ENCODE measurements at regions of chr12 and their contacts with region 1.

Region 1: GRCh38 chr12:13211859-13212664 is 15.5 kb downstream of the EMP1 start:
- DNase-seq: peak; percentile 39 to 62 (median 42)
- ATAC-seq: peak; percentile 74
- H3K4me3 ChIP-seq: no peak overlapping the region
- H3K27ac ChIP-seq: no peak overlapping the region
- H3K4me1 ChIP-seq: no peaks in the 10 kb centered on the region
- H3K27me3 ChIP-seq: peaks cover 0 to 11% of the 10 kb centered on the region in 2 experiments; a peak in 1 of 5 replicates
- CTCF ChIP-seq: peak; percentile 58 to 76 (median 76)
- EP300 ChIP-seq: no peak
- POLR2A ChIP-seq: no peak
- RAD21 ChIP-seq: peak; percentile 59 to 71

Region 2: GRCh38 chr12:12786716-12787601 is 425.1 kb before region 1 on chr12:
- CTCF ChIA-PET with region 1: no interaction called
- POLR2A ChIA-PET with region 1: no interaction called
- in situ Hi-C with region 1: no loop called
- intact Hi-C with region 1: loop called (anchors 5 kb)
- DNase-seq: peak; percentile 84 to 93 (median 90)
- ATAC-seq: peak; percentile 95
- H3K4me3 ChIP-seq: peak overlapping the region; percentile 46
- H3K27ac ChIP-seq: peak overlapping the region; percentile 81
- H3K4me1 ChIP-seq: peaks cover 15 to 37% of the 10 kb centered on the region in 2 experiments
- H3K27me3 ChIP-seq: no peaks in the 10 kb centered on the region
- CTCF ChIP-seq: peak in 1 of 3 experiments; percentile 8; a peak in 1 of 6 replicates
- EP300 ChIP-seq: no peak
- POLR2A ChIP-seq: peak; percentile 77
- RAD21 ChIP-seq: no peak

Region 3: GRCh38 chr12:12916135-12916944 is 295.7 kb before region 1 on chr12:
- CTCF ChIA-PET with region 1: interaction called, 5 read pairs
- POLR2A ChIA-PET with region 1: no interaction called
- in situ Hi-C with region 1: loop called (anchors 5 kb)
- intact Hi-C with region 1: loop called (anchors 2 kb)
- DNase-seq: peak; percentile 66 to 84 (median 70)
- ATAC-seq: peak; percentile 99
- H3K4me3 ChIP-seq: no peak overlapping the region
- H3K27ac ChIP-seq: no peak overlapping the region
- H3K4me1 ChIP-seq: no peaks in the 10 kb centered on the region; a peak in 1 of 5 replicates
- H3K27me3 ChIP-seq: peaks cover 3 to 17% of the 10 kb centered on the region in 2 experiments; a peak in 3 of 5 replicates
- CTCF ChIP-seq: peak; percentile 87 to 94 (median 92)
- EP300 ChIP-seq: no peak
- POLR2A ChIP-seq: no peak
- RAD21 ChIP-seq: peak; percentile 87 to 93

Region 4: DNA sequence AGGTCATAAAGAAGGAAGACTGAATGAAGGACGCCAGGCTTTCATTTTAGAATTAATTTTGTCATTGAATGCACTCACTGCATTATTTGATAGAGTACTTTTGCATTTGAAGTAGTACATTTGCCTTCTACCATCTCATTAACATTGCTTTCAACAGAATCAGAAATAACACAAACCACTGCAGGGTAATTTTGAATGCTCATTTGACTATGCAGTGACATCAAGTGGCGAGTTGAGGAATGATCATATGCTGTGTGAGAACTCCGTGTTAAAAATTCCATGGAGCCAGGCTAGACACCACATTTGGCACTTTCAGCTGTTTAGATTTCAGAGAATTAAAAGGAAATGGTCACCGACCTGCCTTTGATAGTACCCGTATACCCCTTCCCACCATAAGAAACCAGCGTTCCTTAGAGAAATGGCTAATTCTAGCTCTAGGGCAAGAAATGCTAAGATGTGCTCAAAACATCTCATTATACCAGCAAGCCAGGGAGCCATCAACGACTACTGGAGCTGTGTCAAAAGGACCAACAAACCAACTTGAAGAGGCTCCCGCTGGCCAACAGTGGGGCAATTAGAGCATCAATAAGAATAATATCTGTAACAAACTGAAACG is 228.5 kb before region 1 on chr12:
- CTCF ChIA-PET with region 1: interaction called, 3 read pairs
- POLR2A ChIA-PET with region 1: no interaction called
- in situ Hi-C with region 1: no loop called
- intact Hi-C with region 1: loop called (anchors 5 kb)
- DNase-seq: peak; percentile 16 to 29 (median 22)
- ATAC-seq: peak; percentile 81
- H3K4me3 ChIP-seq: no peak overlapping the region
- H3K27ac ChIP-seq: no peak overlapping the region
- H3K4me1 ChIP-seq: peaks cover 0 to 2% of the 10 kb centered on the region in 2 experiments; a peak in 1 of 5 replicates
- H3K27me3 ChIP-seq: no peaks in the 10 kb centered on the region
- CTCF ChIP-seq: peak; percentile 38 to 66 (median 52); a peak in 4 of 6 replicates
- EP300 ChIP-seq: no peak
- POLR2A ChIP-seq: no peak
- RAD21 ChIP-seq: peak; percentile 41 to 61

Region 5: GRCh38 chr12:12999959-13000615 is 212.0 kb before region 1 on chr12 and contains the start of gene HEBP1:
- CTCF ChIA-PET with region 1: no interaction called
- POLR2A ChIA-PET with region 1: no interaction called
- in situ Hi-C with region 1: loop called (anchors 25 kb)
- intact Hi-C with region 1: no loop called
- DNase-seq: peak; percentile 82 to 97 (median 96)
- ATAC-seq: peak; percentile 98
- H3K4me3 ChIP-seq: peak within 1 kb of the TSS; percentile 59
- H3K27ac ChIP-seq: 0 out of 3 replicates have a peak within 1 kb of the TSS, but pooled peaks have one; percentile 36
- H3K4me1 ChIP-seq: peaks cover 6 to 22% of the 10 kb centered on the region in 2 experiments; a peak in 4 of 5 replicates
- H3K27me3 ChIP-seq: no peaks in the 10 kb centered on the region
- CTCF ChIP-seq: no peak
- EP300 ChIP-seq: no peak
- POLR2A ChIP-seq: no peak
- RAD21 ChIP-seq: no peak
- polyA plus RNA-seq, gene HEBP1: 1.1 to 1.4 TPM

Region 6: DNA sequence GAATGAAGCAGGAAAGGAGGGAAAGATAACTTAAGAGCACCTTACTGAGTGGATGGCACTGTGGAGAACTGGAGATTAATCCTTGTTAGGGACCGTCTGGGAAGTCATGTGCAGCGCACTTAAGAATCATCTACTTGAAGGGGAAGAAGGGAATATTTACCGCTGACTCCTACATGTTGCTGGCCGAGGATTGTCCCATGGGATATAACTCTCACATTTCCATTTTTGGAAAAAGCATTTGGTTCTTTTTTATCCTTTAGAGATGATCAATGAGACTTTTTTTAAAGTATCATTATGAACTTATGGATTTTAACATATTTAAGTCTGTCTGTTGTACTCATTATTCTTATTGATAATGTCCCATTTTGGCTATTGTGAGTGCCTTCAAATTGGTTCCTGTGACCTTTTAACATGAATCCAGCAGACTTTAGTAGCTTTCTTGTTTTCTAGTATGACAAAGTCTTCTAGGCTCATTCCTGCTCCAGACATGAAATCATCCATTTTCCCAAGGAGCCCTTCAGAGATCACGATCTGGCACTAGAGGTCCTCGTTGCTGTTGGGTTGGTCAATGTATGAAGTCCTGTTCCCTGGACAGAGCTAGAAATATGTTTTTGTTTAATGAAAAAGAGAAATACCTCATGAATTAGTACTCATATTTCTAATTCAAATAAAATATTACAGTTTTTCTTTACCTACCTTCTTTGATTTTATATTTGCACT is 188.1 kb before region 1 on chr12:
- CTCF ChIA-PET with region 1: interaction called, 3 read pairs
- POLR2A ChIA-PET with region 1: no interaction called
- in situ Hi-C with region 1: loop called (anchors 25 kb)
- intact Hi-C with region 1: loop called (anchors 2 kb)
- DNase-seq: peak; percentile 9 to 35 (median 15)
- ATAC-seq: peak; percentile 81; the same call in 2 of the 3 replicates
- H3K4me3 ChIP-seq: no peak overlapping the region
- H3K27ac ChIP-seq: no peak overlapping the region
- H3K4me1 ChIP-seq: no peaks in the 10 kb centered on the region; a peak in 2 of 5 replicates
- H3K27me3 ChIP-seq: no peaks in the 10 kb centered on the region
- CTCF ChIP-seq: peak; percentile 37 to 61 (median 40); a peak in 5 of 6 replicates
- EP300 ChIP-seq: no peak
- POLR2A ChIP-seq: no peak
- RAD21 ChIP-seq: peak; percentile 50 to 55; a peak in 3 of 4 replicates

Region 7: GRCh38 chr12:13094347-13094746 is 117.7 kb before region 1 on chr12:
- CTCF ChIA-PET with region 1: no interaction called
- POLR2A ChIA-PET with region 1: no interaction called
- in situ Hi-C with region 1: no loop called
- intact Hi-C with region 1: loop called (anchors 2 kb)
- DNase-seq: no peak
- ATAC-seq: no peak
- H3K4me3 ChIP-seq: no peak overlapping the region
- H3K27ac ChIP-seq: no peak overlapping the region
- H3K4me1 ChIP-seq: no peaks in the 10 kb centered on the region; a peak in 1 of 5 replicates
- H3K27me3 ChIP-seq: peaks cover 6 to 39% of the 10 kb centered on the region in 2 experiments; a peak in 3 of 5 replicates
- CTCF ChIP-seq: no peak
- EP300 ChIP-seq: no peak
- POLR2A ChIP-seq: no peak
- RAD21 ChIP-seq: no peak

Region 8: DNA sequence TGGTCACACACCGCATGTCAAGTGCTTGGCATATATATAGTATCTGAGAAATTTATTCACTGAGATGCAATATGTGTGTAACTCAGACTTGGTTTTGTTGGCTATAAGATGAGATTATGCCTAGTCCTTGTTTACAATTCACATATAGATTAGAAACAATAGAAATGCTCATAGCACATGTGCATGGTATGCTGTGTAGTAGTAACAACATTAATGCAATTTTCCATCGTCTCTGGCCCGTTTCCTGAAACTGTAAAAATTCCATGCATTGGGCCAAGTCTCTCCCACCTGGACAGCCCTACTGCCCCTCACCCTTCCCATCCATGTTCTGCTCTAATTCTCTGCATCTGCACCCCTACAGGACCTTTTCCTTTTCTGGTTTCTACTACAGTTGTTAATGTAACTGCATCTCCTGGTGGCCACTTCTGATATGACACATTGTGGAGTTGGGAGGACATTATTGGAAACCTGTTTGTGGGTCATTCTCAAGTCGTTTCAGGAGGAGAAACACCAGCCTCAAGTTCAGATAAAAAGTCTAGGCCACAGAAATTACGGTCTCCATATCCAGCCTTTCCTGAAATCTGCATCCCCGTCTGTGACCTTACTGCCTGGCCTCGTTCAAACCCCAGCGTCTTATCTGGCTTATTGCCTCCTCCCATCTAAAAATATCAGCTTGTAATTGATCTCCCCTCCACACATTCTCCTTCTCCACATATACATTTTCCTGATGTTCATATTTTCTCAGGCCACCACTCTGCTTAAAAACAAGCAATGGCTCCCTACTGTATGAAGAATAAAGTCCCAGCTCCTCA is 22.0 kb after region 1 on chr12:
- CTCF ChIA-PET with region 1: no interaction called
- POLR2A ChIA-PET with region 1: no interaction called
- in situ Hi-C with region 1: no loop called
- intact Hi-C with region 1: no loop called
- DNase-seq: peak; percentile 14 to 36 (median 33)
- ATAC-seq: peak; percentile 71
- H3K4me3 ChIP-seq: no peak overlapping the region
- H3K27ac ChIP-seq: no peak overlapping the region
- H3K4me1 ChIP-seq: no peaks in the 10 kb centered on the region
- H3K27me3 ChIP-seq: no peaks in the 10 kb centered on the region
- CTCF ChIP-seq: peak; percentile 55 to 65 (median 65)
- EP300 ChIP-seq: no peak
- POLR2A ChIP-seq: no peak
- RAD21 ChIP-seq: peak; percentile 22 to 61; a peak in 3 of 4 replicates

Measured in K562 (cell line).